PC-3 (cell line): ENCODE measurements at regions of chr15 and their contacts with region 1.

Region 1: DNA sequence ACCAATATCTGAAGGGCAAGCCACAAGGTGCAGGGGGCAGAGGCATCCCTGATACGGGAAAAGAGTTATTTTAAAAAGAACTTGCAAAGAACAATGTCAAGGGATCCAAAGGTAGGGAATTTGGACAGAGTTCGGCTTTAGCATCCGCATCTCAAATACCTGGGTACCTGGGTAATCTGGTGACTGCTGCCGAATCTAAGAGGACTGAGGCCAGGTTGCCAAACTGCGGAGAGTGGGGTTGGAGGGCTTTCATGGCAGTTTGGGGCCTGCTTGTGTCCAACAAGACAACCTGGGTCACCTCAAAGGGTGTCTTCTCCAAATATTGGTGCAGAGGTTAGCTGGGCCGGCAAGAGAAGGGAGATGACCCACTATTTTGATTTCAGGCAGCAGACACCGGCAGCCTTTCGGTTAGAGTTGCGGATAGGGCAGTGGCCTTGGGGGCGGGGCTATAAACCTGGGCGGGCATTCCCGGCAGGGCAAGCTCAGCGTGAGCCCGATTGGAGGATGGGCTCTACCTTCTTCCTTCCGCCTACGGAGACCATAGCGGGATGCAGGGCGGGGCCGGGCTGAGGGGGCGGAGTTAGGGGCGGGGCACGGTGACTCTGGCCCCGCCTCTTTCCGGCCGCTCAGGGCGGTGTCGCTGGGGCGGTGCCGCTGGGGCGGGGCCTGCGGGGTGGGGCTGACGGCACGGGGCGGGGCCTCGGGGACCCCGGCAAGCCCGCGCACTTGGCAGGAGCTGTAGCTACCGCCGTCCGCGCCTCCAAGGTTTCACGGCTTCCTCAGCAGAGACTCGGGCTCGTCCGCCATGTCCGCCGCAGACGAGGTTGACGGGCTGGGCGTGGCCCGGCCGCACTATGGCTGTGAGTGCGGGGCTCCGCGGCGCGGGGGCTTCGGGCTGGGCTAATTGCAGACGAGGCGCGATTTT is at the start of gene IQGAP1:
- DNase-seq: peak; percentile 97
- ATAC-seq: peak; percentile 97
- H3K4me3 ChIP-seq: peak within 1 kb of the TSS; percentile 97
- H3K27ac ChIP-seq: peak within 1 kb of the TSS; percentile 37
- H3K4me1 ChIP-seq: peaks cover 8% of the 10 kb centered on the region
- H3K27me3 ChIP-seq: no peaks in the 10 kb centered on the region
- CTCF ChIP-seq: no peak
- total RNA-seq, gene IQGAP1: 139 and 148 TPM in 2 replicates

Region 2: GRCh38 chr15:89926158-89926557 is 461.6 kb before region 1 on chr15:
- CTCF ChIA-PET with region 1: no interaction called
- POLR2A ChIA-PET with region 1: no interaction called
- intact Hi-C with region 1: no loop called
- DNase-seq: no peak
- ATAC-seq: no peak
- H3K4me3 ChIP-seq: no peak overlapping the region
- H3K27ac ChIP-seq: no peak overlapping the region
- H3K4me1 ChIP-seq: no peaks in the 10 kb centered on the region
- H3K27me3 ChIP-seq: no peaks in the 10 kb centered on the region
- CTCF ChIP-seq: no peak

Region 3: GRCh38 chr15:89936051-89936785 is 451.6 kb before region 1 on chr15:
- CTCF ChIA-PET with region 1: no interaction called
- POLR2A ChIA-PET with region 1: no interaction called
- intact Hi-C with region 1: no loop called
- DNase-seq: no peak
- ATAC-seq: no peak
- H3K4me3 ChIP-seq: no peak overlapping the region
- H3K27ac ChIP-seq: peak overlapping the region; percentile 94
- H3K4me1 ChIP-seq: peaks cover 17% of the 10 kb centered on the region
- H3K27me3 ChIP-seq: no peaks in the 10 kb centered on the region
- CTCF ChIP-seq: no peak

Region 4: GRCh38 chr15:90320061-90320884 is 67.5 kb before region 1 on chr15:
- CTCF ChIA-PET with region 1: interaction called, 10 read pairs
- POLR2A ChIA-PET with region 1: no interaction called
- intact Hi-C with region 1: no loop called
- DNase-seq: peak; percentile 96
- ATAC-seq: peak; percentile 93
- H3K4me3 ChIP-seq: peak overlapping the region; percentile 28; the same call in 1 of the 2 replicates
- H3K27ac ChIP-seq: no peak overlapping the region
- H3K4me1 ChIP-seq: peaks cover 17% of the 10 kb centered on the region
- H3K27me3 ChIP-seq: no peaks in the 10 kb centered on the region
- CTCF ChIP-seq: peak; percentile 97

Region 5: DNA sequence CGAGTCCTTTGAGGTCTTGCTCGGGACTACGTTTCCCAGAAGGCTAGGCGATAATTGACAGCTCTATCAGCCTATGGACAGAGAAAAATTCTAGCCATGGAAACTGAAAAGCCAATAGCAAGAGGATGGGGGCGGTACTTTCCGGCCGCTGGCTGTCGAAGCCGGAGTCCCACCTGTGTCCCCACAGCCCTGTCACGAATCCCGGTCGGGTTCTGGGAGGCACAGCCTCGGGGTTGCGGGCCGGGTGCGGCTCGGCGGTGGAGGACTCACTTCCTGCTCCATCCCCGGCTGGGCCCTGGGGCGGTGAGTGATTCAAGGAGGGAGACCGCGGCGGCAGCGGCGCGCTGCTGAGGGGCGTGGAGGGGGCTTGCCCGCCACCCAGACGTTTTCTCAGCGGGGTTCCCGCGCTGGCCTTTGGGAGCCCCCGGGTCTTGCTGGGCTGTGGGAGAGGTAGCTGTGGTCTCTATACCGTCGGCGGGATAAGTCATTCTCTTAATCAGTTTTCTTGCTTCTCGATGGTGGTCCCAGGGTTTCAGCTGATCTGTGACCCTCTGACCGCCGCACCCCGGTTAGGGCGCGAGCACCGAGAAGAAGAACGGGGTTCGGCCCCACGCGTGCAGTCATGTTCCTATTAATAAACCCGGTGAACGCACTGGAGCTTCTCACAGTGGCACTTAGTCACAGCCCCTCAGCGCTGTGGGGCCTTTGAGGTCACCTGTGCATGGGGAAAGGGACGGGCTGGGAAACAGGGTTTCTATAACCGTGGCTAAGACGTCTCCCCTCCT is 35.5 kb before region 1 on chr15 and contains the start of gene ZNF774:
- CTCF ChIA-PET with region 1: no interaction called
- POLR2A ChIA-PET with region 1: interaction called, 5 read pairs
- intact Hi-C with region 1: loop called (anchors 5 kb)
- DNase-seq: peak; percentile 98
- ATAC-seq: peak; percentile 97
- H3K4me3 ChIP-seq: peak within 1 kb of the TSS; percentile 76
- H3K27ac ChIP-seq: peak within 1 kb of the TSS; percentile 73
- H3K4me1 ChIP-seq: peaks cover 5% of the 10 kb centered on the region; the same call in 1 of the 2 replicates
- H3K27me3 ChIP-seq: no peaks in the 10 kb centered on the region
- CTCF ChIP-seq: no peak
- total RNA-seq, gene ZNF774: 1.1 and 1.9 TPM in 2 replicates

Region 6: GRCh38 chr15:90362936-90363212 is 24.9 kb before region 1 on chr15:
- CTCF ChIA-PET with region 1: interaction called, 3 read pairs
- POLR2A ChIA-PET with region 1: interaction called, 20 read pairs
- intact Hi-C with region 1: loop called (anchors 1 kb)
- DNase-seq: peak; percentile 61
- ATAC-seq: peak; percentile 48
- H3K4me3 ChIP-seq: no peak overlapping the region
- H3K27ac ChIP-seq: peak overlapping the region; percentile 74
- H3K4me1 ChIP-seq: peaks cover 40% of the 10 kb centered on the region
- H3K27me3 ChIP-seq: no peaks in the 10 kb centered on the region
- CTCF ChIP-seq: no peak

Region 7: GRCh38 chr15:90400406-90401314 is 12.9 kb after region 1 on chr15:
- CTCF ChIA-PET with region 1: no interaction called
- POLR2A ChIA-PET with region 1: interaction called, 5 read pairs
- intact Hi-C with region 1: loop called (anchors 2 kb)
- DNase-seq: peak; percentile 94
- ATAC-seq: peak; percentile 77
- H3K4me3 ChIP-seq: peak overlapping the region; percentile 33
- H3K27ac ChIP-seq: peak overlapping the region; percentile 78
- H3K4me1 ChIP-seq: peaks cover 45% of the 10 kb centered on the region
- H3K27me3 ChIP-seq: no peaks in the 10 kb centered on the region
- CTCF ChIP-seq: no peak

Region 8: DNA sequence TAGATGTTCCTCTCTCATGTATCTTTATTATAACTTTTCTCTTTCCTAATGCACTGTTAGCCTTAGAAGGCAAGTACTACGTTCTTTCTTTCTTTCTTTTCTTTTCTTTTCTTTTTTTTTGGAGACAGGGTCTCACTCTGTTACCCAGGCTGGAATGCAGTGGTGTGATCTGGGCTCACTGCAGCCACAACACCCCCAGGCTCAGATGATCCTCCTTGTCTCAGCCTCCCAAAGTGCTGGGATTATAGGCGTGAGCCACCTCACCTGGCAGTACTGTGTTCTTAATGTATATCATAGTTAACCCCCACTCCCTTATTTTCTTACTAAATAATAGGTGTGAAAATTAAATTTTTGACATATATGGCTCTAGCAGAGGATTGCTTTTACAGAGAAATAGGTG is 23.4 kb after region 1 on chr15:
- CTCF ChIA-PET with region 1: no interaction called
- POLR2A ChIA-PET with region 1: interaction called, 11 read pairs
- intact Hi-C with region 1: no loop called
- DNase-seq: no peak
- ATAC-seq: no peak
- H3K4me3 ChIP-seq: no peak overlapping the region
- H3K27ac ChIP-seq: no peak overlapping the region
- H3K4me1 ChIP-seq: peaks cover 47% of the 10 kb centered on the region
- H3K27me3 ChIP-seq: no peaks in the 10 kb centered on the region
- CTCF ChIP-seq: no peak

Region 9: DNA sequence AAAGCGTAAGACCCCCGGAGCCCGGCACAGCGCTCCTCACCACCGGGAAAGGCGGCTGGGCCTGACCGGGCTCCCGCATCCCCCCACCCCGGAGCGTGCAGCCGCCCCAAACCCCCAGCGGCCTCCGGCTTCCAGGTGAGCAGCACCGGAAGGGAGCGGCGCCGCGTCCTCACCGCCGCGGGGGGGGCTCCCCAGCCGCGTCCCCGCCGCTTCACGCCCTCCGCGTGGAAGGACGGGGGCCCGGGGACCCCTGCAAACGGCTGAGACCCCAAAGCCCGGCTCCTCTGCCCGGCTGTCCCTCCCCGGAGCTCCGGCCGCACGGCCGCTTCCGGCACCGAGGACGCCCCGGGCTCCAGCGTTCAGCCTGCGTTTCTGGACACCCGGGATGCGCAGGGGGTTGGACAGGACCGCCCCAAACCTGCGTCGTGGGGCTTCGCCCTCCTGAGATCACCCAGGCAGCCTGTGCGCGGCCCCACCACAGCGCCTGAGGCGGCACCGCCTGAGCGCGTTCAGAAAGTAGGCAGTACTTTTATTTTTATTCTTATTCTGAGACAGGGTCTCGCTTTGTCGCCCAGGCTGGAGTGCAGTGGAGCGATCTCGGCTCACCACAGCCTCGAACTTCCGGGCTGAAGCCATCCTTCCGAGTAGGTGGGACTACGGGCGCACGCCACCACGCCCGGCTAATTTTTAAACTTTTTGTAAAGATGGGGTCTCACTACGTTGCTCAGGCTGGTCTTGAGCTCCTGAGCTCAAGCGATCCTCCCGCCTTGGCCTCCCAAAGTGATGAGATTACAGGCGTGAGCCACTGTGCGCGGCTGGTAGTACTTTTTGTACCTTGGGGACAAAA is 277.7 kb after region 1 on chr15:
- CTCF ChIA-PET with region 1: no interaction called
- POLR2A ChIA-PET with region 1: no interaction called
- intact Hi-C with region 1: no loop called
- DNase-seq: peak; percentile 65
- ATAC-seq: peak; percentile 90
- H3K4me3 ChIP-seq: peak overlapping the region; percentile 88
- H3K27ac ChIP-seq: peak overlapping the region; percentile 66
- H3K4me1 ChIP-seq: peaks cover 28% of the 10 kb centered on the region
- H3K27me3 ChIP-seq: no peaks in the 10 kb centered on the region
- CTCF ChIP-seq: no peak

Region 10: DNA sequence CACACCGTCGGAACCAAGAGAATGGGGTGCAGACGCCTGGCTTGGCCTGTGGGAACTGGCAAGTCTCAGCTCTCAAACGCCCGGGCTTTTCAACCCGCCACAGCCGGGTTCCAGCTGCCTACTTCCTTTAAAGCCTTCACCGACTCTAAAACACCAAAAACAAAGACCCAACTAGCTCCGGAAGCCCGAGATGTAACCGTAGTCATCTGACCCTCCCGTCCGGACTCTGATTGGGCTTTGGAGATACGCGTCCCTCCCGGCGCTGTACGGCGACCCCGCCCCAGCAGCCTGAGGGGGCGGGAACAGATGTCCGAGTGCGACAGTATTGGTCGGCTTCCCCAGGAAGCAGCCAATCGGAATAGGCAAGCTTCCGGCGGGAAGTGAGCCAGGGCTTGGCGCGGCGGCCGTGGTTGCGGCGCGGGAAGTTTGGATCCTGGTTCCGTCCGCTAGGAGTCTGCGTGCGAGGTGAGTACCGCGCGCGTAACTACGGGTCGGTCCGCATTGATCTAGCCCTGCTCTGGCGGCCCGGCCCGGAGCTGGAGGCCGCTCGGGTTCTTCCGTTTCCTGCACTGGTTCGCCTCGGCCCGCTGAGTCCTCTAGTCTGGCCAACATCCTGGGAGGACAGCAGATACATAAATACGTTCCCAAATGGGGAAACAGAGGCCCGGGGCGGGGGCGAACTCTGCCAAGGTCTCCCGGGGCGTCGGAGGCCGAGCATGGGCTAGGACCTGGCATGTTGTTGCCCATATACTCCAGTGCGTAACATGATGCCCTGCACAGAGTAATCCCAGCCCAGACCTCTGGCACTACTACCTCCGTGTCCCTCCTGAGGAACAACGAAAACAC is 329.4 kb after region 1 on chr15 and contains the start of gene BLM:
- CTCF ChIA-PET with region 1: no interaction called
- POLR2A ChIA-PET with region 1: interaction called, 17 read pairs
- intact Hi-C with region 1: no loop called
- DNase-seq: peak; percentile 96
- ATAC-seq: peak; percentile 99
- H3K4me3 ChIP-seq: peak within 1 kb of the TSS; percentile 75
- H3K27ac ChIP-seq: peak within 1 kb of the TSS; percentile 29; the same call in 1 of the 2 replicates
- H3K4me1 ChIP-seq: peaks cover 5% of the 10 kb centered on the region; the same call in 1 of the 2 replicates
- H3K27me3 ChIP-seq: no peaks in the 10 kb centered on the region
- CTCF ChIP-seq: no peak
- total RNA-seq, gene BLM: 10.3 and 18.7 TPM in 2 replicates